H1 (cell line): ENCODE measurements at regions of chr14 and their contacts with region 1.

Region 1: GRCh38 chr14:72201645-72202044 is 269.4 kb downstream of the RGS6 start:
- DNase-seq: no peak
- H3K4me3 ChIP-seq: no peak overlapping the region
- H3K27ac ChIP-seq: no peak overlapping the region
- H3K4me1 ChIP-seq: no peaks in the 10 kb centered on the region
- H3K27me3 ChIP-seq: no peaks in the 10 kb centered on the region
- CTCF ChIP-seq: no peak
- EP300 ChIP-seq: no peak
- POLR2A ChIP-seq: no peak
- RAD21 ChIP-seq: no peak

Region 2: GRCh38 chr14:72213424-72213823 is 11.8 kb after region 1 on chr14:
- CTCF ChIA-PET with region 1: interaction called, 12 read pairs
- POLR2A ChIA-PET with region 1: no interaction called
- DNase-seq: no peak
- H3K4me3 ChIP-seq: no peak overlapping the region
- H3K27ac ChIP-seq: no peak overlapping the region
- H3K4me1 ChIP-seq: no peaks in the 10 kb centered on the region
- H3K27me3 ChIP-seq: no peaks in the 10 kb centered on the region
- CTCF ChIP-seq: no peak
- EP300 ChIP-seq: no peak
- POLR2A ChIP-seq: no peak
- RAD21 ChIP-seq: no peak

Region 3: GRCh38 chr14:72352012-72352411 is 150.4 kb after region 1 on chr14:
- CTCF ChIA-PET with region 1: no interaction called
- POLR2A ChIA-PET with region 1: no interaction called
- DNase-seq: no peak
- H3K4me3 ChIP-seq: no peak overlapping the region
- H3K27ac ChIP-seq: no peak overlapping the region
- H3K4me1 ChIP-seq: no peaks in the 10 kb centered on the region
- H3K27me3 ChIP-seq: no peaks in the 10 kb centered on the region
- CTCF ChIP-seq: no peak
- EP300 ChIP-seq: no peak
- POLR2A ChIP-seq: no peak
- RAD21 ChIP-seq: no peak